ENCODE measurements at regions of chr1 and their contacts with region 1.

Region 1: GRCh38 chr1:203340112-203340804 is 10.7 kb downstream of the FMOD start:
- DNase-seq: peak; percentile 67
- ATAC-seq: peak; percentile 83

Region 2: GRCh38 chr1:203273206-203273868 is 66.9 kb before region 1 on chr1:
- intact Hi-C with region 1: loop called (anchors 5 kb)
- DNase-seq: peak; percentile 90
- ATAC-seq: peak; percentile 63

Region 3: GRCh38 chr1:203428981-203429599 is 88.8 kb after region 1 on chr1:
- intact Hi-C with region 1: no loop called
- DNase-seq: no peak
- ATAC-seq: no peak

Region 4: GRCh38 chr1:203486618-203487370 is 146.5 kb after region 1 on chr1:
- intact Hi-C with region 1: loop called (anchors 5 kb)
- DNase-seq: no peak
- ATAC-seq: peak; percentile 32

Measured in left ventricle myocardium superior (tissue), 1 donor.